ENCODE measurements at regions of chr6 and their contacts with region 1.

Region 1: DNA sequence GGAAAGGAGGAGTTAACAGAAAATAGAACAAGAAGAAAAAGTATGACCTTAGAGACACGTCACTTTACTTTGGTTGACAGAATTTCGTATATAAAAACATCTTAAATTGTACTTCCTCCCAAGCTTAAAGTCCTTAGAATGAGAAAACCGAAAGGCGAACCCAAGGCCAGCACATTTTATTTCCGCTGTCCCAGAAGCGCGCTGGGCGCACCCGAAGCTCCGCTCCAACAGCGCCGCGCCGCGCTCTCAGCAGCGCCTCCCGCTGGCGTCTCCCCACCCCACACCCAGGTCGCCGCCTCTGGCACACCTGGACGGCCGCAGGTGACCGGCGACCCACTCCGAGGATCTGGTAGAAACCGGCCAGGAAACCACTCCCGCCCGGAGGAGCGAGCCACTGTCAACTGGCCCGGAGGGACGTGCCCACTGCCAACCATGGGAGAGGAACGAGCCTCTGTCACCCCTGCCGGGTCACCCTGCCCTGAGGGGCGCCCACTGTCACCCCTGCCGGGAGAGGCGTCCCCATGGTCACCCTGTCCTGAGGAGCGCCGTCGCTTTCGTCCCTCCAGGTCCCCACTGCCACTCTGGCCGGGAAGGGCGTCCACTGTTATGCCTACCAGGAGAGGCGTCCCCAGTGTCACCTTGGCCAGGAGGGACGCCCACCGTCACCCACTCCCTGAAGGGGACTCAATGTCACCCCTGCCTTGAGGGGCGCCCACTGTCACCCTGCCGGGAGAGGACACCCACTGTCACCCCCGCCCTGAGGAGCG is 824 bp downstream of the MPC1 start:
- DNase-seq: no peak
- H3K4me3 ChIP-seq: peak overlapping the region; percentile 83
- CTCF ChIP-seq: peak; percentile 83

Region 2: GRCh38 chr6:166143011-166143410 is 238.9 kb before region 1 on chr6:
- CTCF ChIA-PET with region 1: no interaction called
- POLR2A ChIA-PET with region 1: no interaction called
- DNase-seq: no peak
- H3K4me3 ChIP-seq: no peak overlapping the region
- CTCF ChIP-seq: no peak

Region 3: GRCh38 chr6:166156942-166157341 is 225.0 kb before region 1 on chr6:
- CTCF ChIA-PET with region 1: no interaction called
- POLR2A ChIA-PET with region 1: no interaction called
- DNase-seq: no peak
- H3K4me3 ChIP-seq: no peak overlapping the region
- CTCF ChIP-seq: no peak

Region 4: GRCh38 chr6:166237617-166238016 is 144.3 kb before region 1 on chr6:
- CTCF ChIA-PET with region 1: no interaction called
- POLR2A ChIA-PET with region 1: no interaction called
- DNase-seq: peak; percentile 5
- H3K4me3 ChIP-seq: no peak overlapping the region
- CTCF ChIP-seq: no peak

Region 5: DNA sequence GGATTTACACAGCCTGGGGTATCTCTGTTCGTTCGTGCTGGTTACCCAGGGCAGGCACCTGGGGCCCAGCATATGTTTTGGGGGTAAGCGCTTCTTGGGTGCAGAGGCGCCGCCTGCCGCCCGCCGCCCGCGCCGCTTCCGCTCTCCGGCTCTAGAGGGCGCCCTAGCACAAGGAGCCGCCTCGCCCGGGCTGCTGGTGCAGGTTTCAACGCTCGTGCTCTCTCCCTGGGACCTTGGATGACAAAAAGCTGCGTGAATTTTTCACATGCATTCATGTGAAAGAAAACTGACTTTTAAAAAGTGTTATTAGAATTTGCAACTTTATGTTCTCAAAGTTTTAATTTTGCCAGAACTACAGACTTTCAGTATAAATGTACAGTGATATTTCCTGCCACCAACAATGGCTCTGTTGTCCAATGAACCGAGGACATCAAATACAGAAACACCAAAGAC is 106.2 kb before region 1 on chr6:
- CTCF ChIA-PET with region 1: interaction called, 23 read pairs
- POLR2A ChIA-PET with region 1: no interaction called
- DNase-seq: no peak
- H3K4me3 ChIP-seq: no peak overlapping the region
- CTCF ChIP-seq: peak; percentile 98

Region 6: GRCh38 chr6:166365221-166365620 is 16.7 kb before region 1 on chr6:
- CTCF ChIA-PET with region 1: interaction called, 30 read pairs
- POLR2A ChIA-PET with region 1: no interaction called
- DNase-seq: no peak
- H3K4me3 ChIP-seq: no peak overlapping the region
- CTCF ChIP-seq: no peak

Region 7: GRCh38 chr6:166410426-166410935 is 28.6 kb after region 1 on chr6:
- CTCF ChIA-PET with region 1: no interaction called
- POLR2A ChIA-PET with region 1: no interaction called
- DNase-seq: no peak
- H3K4me3 ChIP-seq: no peak overlapping the region
- CTCF ChIP-seq: no peak